ENCODE measurements at regions of chr9 and their contacts with region 1.

Region 1: GRCh38 chr9:35071814-35072460 is 488 bp downstream of the VCP start:
- DNase-seq: peak; percentile 47 to 96 (median 72)

Region 2: GRCh38 chr9:34994260-34994899 is 77.6 kb before region 1 on chr9:
- intact Hi-C with region 1: loop called (anchors 2 kb)
- DNase-seq: peak in 4 of 10 donors; percentile 34 to 58 (median 49)

Region 3: GRCh38 chr9:35161713-35162604 is 90.0 kb after region 1 on chr9 and contains the start of gene UNC13B:
- intact Hi-C with region 1: loop called (anchors 10 kb)
- DNase-seq: peak; percentile 90 to 99 (median 94)